OCI-LY7 (cell line): ENCODE measurements at regions of chr1 and their contacts with region 1.

Region 1: GRCh38 chr1:94979656-94980581 is 53.0 kb upstream of the CNN3 start:
- DNase-seq: no peak
- H3K4me3 ChIP-seq: no peak overlapping the region
- H3K27ac ChIP-seq: peak overlapping the region; percentile 25
- H3K4me1 ChIP-seq: peaks cover 21% of the 10 kb centered on the region
- CTCF ChIP-seq: no peak

Region 2: DNA sequence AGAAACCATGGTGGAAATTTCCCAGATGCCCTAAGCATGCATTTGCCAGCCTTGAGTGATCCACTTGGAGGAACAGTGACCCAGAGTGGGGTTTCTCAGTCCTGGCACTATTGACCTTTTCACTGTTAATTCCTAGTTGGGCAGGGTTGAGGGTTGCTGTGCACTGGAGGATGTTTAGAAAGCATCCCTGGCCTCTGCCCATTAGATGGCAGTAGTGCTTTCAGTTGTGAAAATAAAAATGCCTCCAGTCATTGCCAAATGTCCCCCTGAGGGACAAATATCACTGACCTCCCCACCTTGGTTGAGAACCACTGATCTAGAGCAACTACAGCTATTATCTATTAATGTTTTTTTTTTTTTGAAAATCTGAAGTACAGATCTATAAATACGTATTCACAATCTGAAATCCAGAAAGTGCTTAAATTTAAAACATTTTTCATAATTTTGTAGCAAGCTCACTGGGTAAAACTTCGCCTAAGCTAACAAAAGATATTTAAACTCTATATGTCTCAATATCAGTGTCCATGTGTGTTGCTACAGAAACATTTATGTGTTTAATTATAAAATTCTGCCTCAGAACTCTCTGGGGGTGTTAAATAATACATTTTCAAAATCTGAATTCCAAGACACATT is 465.7 kb before region 1 on chr1:
- CTCF ChIA-PET with region 1: no interaction called
- POLR2A ChIA-PET with region 1: no interaction called
- intact Hi-C with region 1: no loop called
- DNase-seq: peak; percentile 25
- H3K4me3 ChIP-seq: no peak overlapping the region
- H3K27ac ChIP-seq: no peak overlapping the region
- H3K4me1 ChIP-seq: no peaks in the 10 kb centered on the region
- CTCF ChIP-seq: peak; percentile 79

Region 3: DNA sequence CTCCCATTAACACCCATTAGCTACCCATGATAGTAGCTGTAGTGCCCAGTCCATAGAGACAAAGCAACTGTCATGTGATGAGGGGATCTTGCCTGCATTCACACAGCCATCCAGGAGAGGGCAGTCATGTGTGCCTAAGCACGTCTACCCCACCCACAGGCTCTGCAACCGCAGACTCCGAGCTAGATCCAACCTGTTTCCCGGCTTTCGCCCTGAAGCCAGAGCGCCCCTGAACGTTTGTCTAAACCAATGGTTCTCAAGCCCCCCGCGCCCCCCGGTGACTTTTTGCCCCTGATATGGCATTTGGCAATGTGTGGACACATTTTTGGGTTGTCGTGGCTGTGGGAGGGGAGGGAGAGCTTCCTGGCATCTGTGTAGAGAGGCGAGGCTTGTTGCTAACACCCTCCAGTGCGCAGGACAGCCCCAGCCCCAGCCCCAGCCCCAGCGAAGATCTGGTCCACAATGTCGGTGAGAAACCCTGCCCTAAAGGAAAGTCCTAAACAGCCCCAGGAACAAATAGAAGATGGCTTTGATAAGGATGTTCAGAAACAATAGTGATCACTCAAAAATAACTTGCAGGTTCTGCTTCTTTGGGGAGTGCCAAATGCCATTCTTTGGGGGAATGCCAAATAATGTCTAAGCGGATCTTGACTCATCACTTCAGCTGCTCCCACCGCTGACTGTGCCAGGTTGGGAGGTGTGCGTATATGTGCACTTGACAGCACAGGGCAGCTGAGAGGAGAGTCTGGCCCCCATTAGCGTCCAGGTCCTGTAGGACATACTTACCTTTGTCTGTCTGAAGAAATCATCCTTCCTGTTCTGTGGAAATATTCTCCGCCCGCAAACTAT is 125.2 kb before region 1 on chr1:
- CTCF ChIA-PET with region 1: no interaction called
- POLR2A ChIA-PET with region 1: no interaction called
- intact Hi-C with region 1: no loop called
- DNase-seq: peak; percentile 77
- H3K4me3 ChIP-seq: no peak overlapping the region
- H3K27ac ChIP-seq: no peak overlapping the region
- H3K4me1 ChIP-seq: no peaks in the 10 kb centered on the region
- CTCF ChIP-seq: peak; percentile 83

Region 4: GRCh38 chr1:94865360-94865759 is 114.6 kb before region 1 on chr1:
- CTCF ChIA-PET with region 1: no interaction called
- POLR2A ChIA-PET with region 1: interaction called, 11 read pairs
- intact Hi-C with region 1: no loop called
- DNase-seq: no peak
- H3K4me3 ChIP-seq: no peak overlapping the region
- H3K27ac ChIP-seq: no peak overlapping the region
- H3K4me1 ChIP-seq: no peaks in the 10 kb centered on the region
- CTCF ChIP-seq: no peak

Region 5: GRCh38 chr1:95043141-95043980 is 63.4 kb after region 1 on chr1:
- CTCF ChIA-PET with region 1: no interaction called
- POLR2A ChIA-PET with region 1: no interaction called
- intact Hi-C with region 1: no loop called
- DNase-seq: peak; percentile 83
- H3K4me3 ChIP-seq: no peak overlapping the region
- H3K27ac ChIP-seq: no peak overlapping the region
- H3K4me1 ChIP-seq: no peaks in the 10 kb centered on the region
- CTCF ChIP-seq: peak; percentile 100